ENCODE measurements at regions of chr15 and their contacts with region 1.

Region 1: GRCh38 chr15:63048115-63048775 is 5.7 kb downstream of the TPM1 start:
- DNase-seq: peak; percentile 83
- H3K4me3 Mint-ChIP-seq: peak overlapping the region; percentile 96
- H3K27ac Mint-ChIP-seq: peak overlapping the region; percentile 76
- H3K4me1 Mint-ChIP-seq: peaks cover 68% of the 10 kb centered on the region
- H3K27me3 Mint-ChIP-seq: no peaks in the 10 kb centered on the region
- CTCF ChIP-seq: peak; percentile 95

Region 2: GRCh38 chr15:62791694-62792093 is 256.6 kb before region 1 on chr15:
- CTCF ChIA-PET with region 1: interaction called, 12 read pairs
- POLR2A ChIA-PET with region 1: no interaction called
- intact Hi-C with region 1: no loop called
- DNase-seq: no peak
- H3K4me3 Mint-ChIP-seq: no peak overlapping the region
- H3K27ac Mint-ChIP-seq: no peak overlapping the region
- H3K4me1 Mint-ChIP-seq: no peaks in the 10 kb centered on the region
- H3K27me3 Mint-ChIP-seq: no peaks in the 10 kb centered on the region
- CTCF ChIP-seq: no peak

Region 3: GRCh38 chr15:62940755-62941361 is 107.4 kb before region 1 on chr15:
- CTCF ChIA-PET with region 1: interaction called, 10 read pairs
- POLR2A ChIA-PET with region 1: no interaction called
- intact Hi-C with region 1: no loop called
- DNase-seq: peak; percentile 90
- H3K4me3 Mint-ChIP-seq: no peak overlapping the region
- H3K27ac Mint-ChIP-seq: peak overlapping the region; percentile 9
- H3K4me1 Mint-ChIP-seq: peaks cover 20% of the 10 kb centered on the region
- H3K27me3 Mint-ChIP-seq: no peaks in the 10 kb centered on the region
- CTCF ChIP-seq: no peak

Region 4: GRCh38 chr15:63070681-63071129 is 22.5 kb after region 1 on chr15:
- CTCF ChIA-PET with region 1: interaction called, 11 read pairs
- POLR2A ChIA-PET with region 1: interaction called, 12 read pairs
- intact Hi-C with region 1: no loop called
- DNase-seq: no peak
- H3K4me3 Mint-ChIP-seq: no peak overlapping the region
- H3K27ac Mint-ChIP-seq: no peak overlapping the region
- H3K4me1 Mint-ChIP-seq: no peaks in the 10 kb centered on the region
- H3K27me3 Mint-ChIP-seq: no peaks in the 10 kb centered on the region
- CTCF ChIP-seq: no peak

Region 5: GRCh38 chr15:63135804-63136203 is 87.6 kb after region 1 on chr15:
- CTCF ChIA-PET with region 1: interaction called, 3 read pairs
- POLR2A ChIA-PET with region 1: interaction called, 12 read pairs
- intact Hi-C with region 1: no loop called
- DNase-seq: peak; percentile 79
- H3K4me3 Mint-ChIP-seq: no peak overlapping the region
- H3K27ac Mint-ChIP-seq: peak overlapping the region; percentile 91
- H3K4me1 Mint-ChIP-seq: peaks cover 20% of the 10 kb centered on the region
- H3K27me3 Mint-ChIP-seq: no peaks in the 10 kb centered on the region
- CTCF ChIP-seq: no peak

Measured in MCF 10A (cell line).